ENCODE measurements at regions of chr5 and their contacts with region 1.

Region 1: DNA sequence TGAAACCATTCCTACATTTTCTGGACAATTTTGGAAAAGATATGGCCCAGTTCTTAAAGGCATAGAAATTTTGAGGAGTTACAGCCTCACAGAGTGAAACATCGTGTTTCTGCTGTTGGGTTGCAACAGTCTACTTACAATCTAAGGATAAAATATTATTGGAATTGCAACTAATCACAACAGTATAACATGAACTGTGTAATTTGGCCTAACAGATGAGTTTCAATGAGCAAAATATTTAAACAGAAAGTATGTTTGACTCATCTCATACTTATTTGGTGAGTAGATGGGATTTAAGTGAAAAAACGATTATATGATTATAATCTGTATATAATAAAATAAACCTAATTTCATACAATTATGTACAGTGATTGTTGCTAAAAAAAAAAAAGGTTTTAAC is 1061.8 kb downstream of the CDH12 start:
- DNase-seq: peak; percentile 78
- ATAC-seq: peak; percentile 58
- H3K4me3 ChIP-seq: peak overlapping the region; percentile 25; the same call in 1 of the 2 replicates
- H3K27ac ChIP-seq: peak overlapping the region; percentile 45
- H3K4me1 ChIP-seq: peaks cover 44% of the 10 kb centered on the region
- H3K27me3 ChIP-seq: no peaks in the 10 kb centered on the region
- CTCF ChIP-seq: no peak

Region 2: DNA sequence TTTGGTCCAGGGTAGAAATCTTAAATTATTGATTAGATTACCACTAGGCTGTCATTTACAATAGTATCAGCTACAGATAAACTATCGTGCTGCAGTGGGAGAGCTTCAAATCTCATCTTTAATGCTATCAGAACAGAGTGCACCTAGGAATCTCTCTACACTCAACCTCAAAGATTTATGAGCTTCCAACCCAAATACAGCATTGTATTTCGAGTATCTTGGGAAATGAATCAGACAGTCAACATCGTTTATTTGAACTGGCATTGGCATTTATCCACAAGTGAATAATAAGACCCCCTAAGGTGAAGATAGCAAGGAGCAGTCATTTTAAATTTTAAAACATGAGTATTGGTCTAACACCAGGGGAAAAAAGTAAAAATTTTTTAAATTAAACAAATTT is 141.3 kb before region 1 on chr5:
- CTCF ChIA-PET with region 1: no interaction called
- POLR2A ChIA-PET with region 1: no interaction called
- intact Hi-C with region 1: loop called (anchors 5 kb)
- DNase-seq: peak; percentile 94
- ATAC-seq: peak; percentile 98
- H3K4me3 ChIP-seq: peak overlapping the region; percentile 14; the same call in 1 of the 2 replicates
- H3K27ac ChIP-seq: peak overlapping the region; percentile 27
- H3K4me1 ChIP-seq: peaks cover 26% of the 10 kb centered on the region
- H3K27me3 ChIP-seq: no peaks in the 10 kb centered on the region
- CTCF ChIP-seq: no peak

Region 3: DNA sequence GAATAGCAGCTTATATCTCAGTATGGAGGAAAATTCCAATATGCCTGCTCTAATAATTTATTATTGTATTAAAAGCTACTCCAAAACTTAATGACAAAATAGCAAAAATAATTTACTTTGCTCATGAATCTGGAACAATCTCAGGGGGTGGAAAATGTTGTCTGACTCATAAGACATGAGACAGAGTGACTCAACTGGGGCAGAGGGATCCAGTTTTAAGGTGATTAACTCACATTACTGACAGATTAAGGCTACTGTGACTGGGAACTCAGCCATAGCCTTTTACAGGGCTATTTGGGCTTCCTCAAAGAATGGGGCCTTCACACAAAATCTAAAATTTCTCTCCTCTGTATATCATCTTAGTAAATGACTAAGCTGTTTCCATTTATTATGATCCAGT is 111.1 kb before region 1 on chr5:
- CTCF ChIA-PET with region 1: no interaction called
- POLR2A ChIA-PET with region 1: interaction called, 5 read pairs
- intact Hi-C with region 1: loop called (anchors 2 kb)
- DNase-seq: peak; percentile 96
- ATAC-seq: peak; percentile 97
- H3K4me3 ChIP-seq: no peak overlapping the region; the same call in 1 of the 2 replicates
- H3K27ac ChIP-seq: peak overlapping the region; percentile 87
- H3K4me1 ChIP-seq: peaks cover 31% of the 10 kb centered on the region
- H3K27me3 ChIP-seq: no peaks in the 10 kb centered on the region
- CTCF ChIP-seq: no peak

Region 4: DNA sequence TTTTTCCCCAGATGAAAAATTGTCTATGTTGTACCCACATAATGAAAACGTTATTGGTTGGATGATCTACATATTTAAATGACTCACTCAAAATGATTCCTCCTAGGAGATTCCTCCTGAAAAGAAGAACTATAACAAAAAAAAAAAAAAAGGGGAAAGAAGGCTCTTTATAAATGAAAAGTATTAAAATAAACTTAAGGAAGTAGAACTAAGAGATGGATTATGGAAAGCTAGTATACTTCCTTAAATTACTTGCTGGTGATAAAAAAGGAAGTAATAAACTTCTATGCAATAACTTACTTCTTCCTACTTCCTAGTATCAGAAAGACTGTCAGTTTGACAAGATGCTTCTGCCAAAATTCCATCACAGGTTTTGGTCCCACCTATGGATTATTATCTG is 25.9 kb before region 1 on chr5:
- CTCF ChIA-PET with region 1: no interaction called
- POLR2A ChIA-PET with region 1: no interaction called
- intact Hi-C with region 1: no loop called
- DNase-seq: no peak
- ATAC-seq: no peak
- H3K4me3 ChIP-seq: no peak overlapping the region
- H3K27ac ChIP-seq: no peak overlapping the region
- H3K4me1 ChIP-seq: no peaks in the 10 kb centered on the region
- H3K27me3 ChIP-seq: no peaks in the 10 kb centered on the region
- CTCF ChIP-seq: no peak

Region 5: GRCh38 chr5:22088517-22088916 is 297.2 kb after region 1 on chr5:
- CTCF ChIA-PET with region 1: no interaction called
- POLR2A ChIA-PET with region 1: no interaction called
- intact Hi-C with region 1: no loop called
- DNase-seq: no peak
- ATAC-seq: no peak
- H3K4me3 ChIP-seq: no peak overlapping the region
- H3K27ac ChIP-seq: no peak overlapping the region
- H3K4me1 ChIP-seq: no peaks in the 10 kb centered on the region
- H3K27me3 ChIP-seq: peaks cover 12% of the 10 kb centered on the region; the same call in 1 of the 2 replicates
- CTCF ChIP-seq: no peak

Measured in PC-3 (cell line).